ENCODE measurements at regions of chr2 and their contacts with region 1.

Region 1: GRCh38 chr2:68828887-68829708 is 42.1 kb downstream of the BMP10 start:
- DNase-seq: peak; percentile 86
- H3K4me3 Mint-ChIP-seq: peak overlapping the region; percentile 21
- H3K27ac Mint-ChIP-seq: peak overlapping the region; percentile 79
- H3K4me1 Mint-ChIP-seq: peaks cover 64% of the 10 kb centered on the region
- H3K27me3 Mint-ChIP-seq: no peaks in the 10 kb centered on the region

Region 2: GRCh38 chr2:68734688-68735525 is 94.2 kb before region 1 on chr2 and contains the start of gene ARHGAP25:
- CTCF ChIA-PET with region 1: no interaction called
- POLR2A ChIA-PET with region 1: no interaction called
- intact Hi-C with region 1: loop called (anchors 1 kb)
- DNase-seq: peak; percentile 87
- H3K4me3 Mint-ChIP-seq: no peak within 1 kb of the TSS
- H3K27ac Mint-ChIP-seq: no peak within 1 kb of the TSS
- H3K4me1 Mint-ChIP-seq: peaks cover 36% of the 10 kb centered on the region
- H3K27me3 Mint-ChIP-seq: no peaks in the 10 kb centered on the region
- total RNA-seq, gene ARHGAP25: 79.8 to 87.7 TPM

Region 3: DNA sequence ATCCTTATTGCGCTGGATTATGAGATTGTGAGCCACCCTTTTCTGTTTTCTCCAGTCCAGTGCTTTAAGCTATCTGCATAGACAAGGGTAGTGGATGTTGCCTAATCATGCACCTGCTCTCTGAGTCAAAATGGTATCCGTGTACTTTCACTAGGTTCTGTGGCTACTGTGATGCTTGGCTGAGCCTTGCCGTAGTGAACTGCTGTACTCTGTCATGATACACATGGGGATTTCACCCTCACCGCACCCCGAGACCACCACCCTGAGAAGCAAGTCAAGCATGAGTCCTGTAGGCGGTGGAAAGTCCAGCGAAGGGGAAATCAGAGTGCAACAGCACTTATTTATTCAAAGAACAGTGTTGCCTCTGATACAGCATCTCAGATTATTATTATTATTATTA is 39.5 kb before region 1 on chr2:
- CTCF ChIA-PET with region 1: no interaction called
- POLR2A ChIA-PET with region 1: no interaction called
- intact Hi-C with region 1: loop called (anchors 1 kb)
- DNase-seq: peak; percentile 83
- H3K4me3 Mint-ChIP-seq: no peak overlapping the region
- H3K27ac Mint-ChIP-seq: peak overlapping the region; percentile 25
- H3K4me1 Mint-ChIP-seq: peaks cover 53% of the 10 kb centered on the region
- H3K27me3 Mint-ChIP-seq: no peaks in the 10 kb centered on the region

Region 4: GRCh38 chr2:68811364-68811763 is 17.7 kb before region 1 on chr2:
- CTCF ChIA-PET with region 1: no interaction called
- POLR2A ChIA-PET with region 1: no interaction called
- intact Hi-C with region 1: loop called (anchors 2 kb)
- DNase-seq: no peak
- H3K4me3 Mint-ChIP-seq: no peak overlapping the region
- H3K27ac Mint-ChIP-seq: peak overlapping the region; percentile 23
- H3K4me1 Mint-ChIP-seq: peaks cover 28% of the 10 kb centered on the region
- H3K27me3 Mint-ChIP-seq: no peaks in the 10 kb centered on the region